K562 (cell line): ENCODE measurements at regions of chr7 and their contacts with region 1.

Region 1: DNA sequence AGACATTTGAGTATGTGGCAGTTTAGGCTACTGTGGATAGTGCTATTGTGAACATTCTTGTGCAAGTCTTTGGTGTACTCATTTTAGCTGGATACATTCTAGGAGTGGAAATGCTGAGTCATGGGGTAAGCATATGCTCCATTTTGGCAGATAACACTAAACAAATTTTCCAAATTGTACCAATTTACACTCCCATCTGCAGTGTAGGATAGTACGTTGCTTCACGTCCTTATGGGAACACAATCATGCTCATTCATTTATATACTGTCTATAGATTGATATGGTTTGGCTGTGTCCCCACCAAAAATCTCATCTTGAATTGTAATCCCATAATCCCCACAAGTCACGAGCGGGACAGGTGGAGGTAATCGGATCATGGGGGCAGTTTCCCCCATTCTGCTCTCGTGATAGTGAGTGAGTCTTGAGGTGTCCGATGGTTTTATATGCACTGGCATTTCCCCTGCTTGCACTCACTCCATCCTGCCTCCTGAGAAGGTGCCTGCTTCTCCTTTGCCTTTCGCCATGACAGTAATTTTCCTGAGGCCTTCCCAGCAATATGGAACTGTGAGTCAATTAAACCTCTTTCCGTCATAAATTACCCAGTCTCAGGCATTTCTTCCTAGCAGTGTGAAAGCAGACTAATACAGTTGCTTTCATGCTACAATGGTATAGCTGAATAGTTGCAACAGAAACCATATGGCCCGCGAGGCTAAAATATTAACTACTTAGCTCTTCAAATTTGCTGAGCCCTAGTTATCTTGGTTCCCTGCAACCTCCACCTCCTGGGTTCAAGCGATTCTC is 25.6 kb downstream of the RNF216 start:
- DNase-seq: peak; percentile 41 to 78 (median 54)
- ATAC-seq: peak; percentile 86
- H3K4me3 ChIP-seq: no peak overlapping the region
- H3K27ac ChIP-seq: peak overlapping the region; percentile 63
- H3K4me1 ChIP-seq: peaks cover 8 to 20% of the 10 kb centered on the region in 2 experiments; a peak in 4 of 5 replicates
- H3K27me3 ChIP-seq: no peaks in the 10 kb centered on the region
- CTCF ChIP-seq: no peak
- EP300 ChIP-seq: peak; percentile 59
- POLR2A ChIP-seq: no peak
- RAD21 ChIP-seq: no peak

Region 2: DNA sequence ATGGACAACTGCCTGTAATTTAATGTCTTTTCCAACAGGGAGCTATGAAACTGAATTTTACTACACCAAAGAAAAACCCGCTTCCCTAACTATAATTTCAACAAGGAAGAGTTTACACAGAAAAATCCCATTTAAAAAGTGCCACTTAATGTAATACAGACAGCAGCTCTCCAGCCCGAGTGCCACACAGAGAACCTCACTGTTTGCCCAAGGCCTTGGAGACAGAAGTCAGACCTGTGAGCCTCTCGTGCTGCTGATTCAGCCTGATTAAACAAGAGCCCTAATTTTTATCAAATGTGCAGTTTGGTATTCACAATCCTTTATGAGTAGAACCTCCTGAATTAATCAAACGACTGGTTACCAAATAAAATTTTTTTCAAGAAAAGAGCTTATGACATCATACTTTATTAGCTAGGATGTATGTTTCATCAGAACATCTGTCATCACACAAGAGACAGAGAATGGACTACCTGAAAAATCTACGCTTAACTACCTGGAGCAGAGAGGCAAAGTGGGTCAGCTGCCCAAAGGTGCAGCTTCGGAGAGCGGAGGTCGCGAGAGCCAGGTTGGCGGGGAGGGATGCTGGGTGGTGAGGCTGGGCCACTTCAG is 1911.3 kb before region 1 on chr7:
- CTCF ChIA-PET with region 1: no interaction called
- POLR2A ChIA-PET with region 1: no interaction called
- in situ Hi-C with region 1: no loop called
- intact Hi-C with region 1: no loop called
- DNase-seq: no peak
- ATAC-seq: no peak
- H3K4me3 ChIP-seq: no peak overlapping the region
- H3K27ac ChIP-seq: no peak overlapping the region
- H3K4me1 ChIP-seq: no peaks in the 10 kb centered on the region
- H3K27me3 ChIP-seq: peaks cover 6 to 38% of the 10 kb centered on the region in 2 experiments; a peak in 4 of 5 replicates
- CTCF ChIP-seq: no peak
- EP300 ChIP-seq: no peak
- POLR2A ChIP-seq: no peak
- RAD21 ChIP-seq: no peak

Region 3: GRCh38 chr7:5766321-5766761 is 10.4 kb after region 1 on chr7:
- CTCF ChIA-PET with region 1: no interaction called
- POLR2A ChIA-PET with region 1: interaction called, 21 read pairs
- in situ Hi-C with region 1: no loop called
- intact Hi-C with region 1: no loop called
- DNase-seq: no peak
- ATAC-seq: no peak
- H3K4me3 ChIP-seq: no peak overlapping the region
- H3K27ac ChIP-seq: no peak overlapping the region
- H3K4me1 ChIP-seq: peaks cover 0 to under 1% of the 10 kb centered on the region in 2 experiments; a peak in 3 of 5 replicates
- H3K27me3 ChIP-seq: no peaks in the 10 kb centered on the region
- CTCF ChIP-seq: no peak
- EP300 ChIP-seq: no peak
- POLR2A ChIP-seq: no peak
- RAD21 ChIP-seq: no peak